AG04450 (cell line): ENCODE measurements at regions of chr22 and their contacts with region 1.

Region 1: DNA sequence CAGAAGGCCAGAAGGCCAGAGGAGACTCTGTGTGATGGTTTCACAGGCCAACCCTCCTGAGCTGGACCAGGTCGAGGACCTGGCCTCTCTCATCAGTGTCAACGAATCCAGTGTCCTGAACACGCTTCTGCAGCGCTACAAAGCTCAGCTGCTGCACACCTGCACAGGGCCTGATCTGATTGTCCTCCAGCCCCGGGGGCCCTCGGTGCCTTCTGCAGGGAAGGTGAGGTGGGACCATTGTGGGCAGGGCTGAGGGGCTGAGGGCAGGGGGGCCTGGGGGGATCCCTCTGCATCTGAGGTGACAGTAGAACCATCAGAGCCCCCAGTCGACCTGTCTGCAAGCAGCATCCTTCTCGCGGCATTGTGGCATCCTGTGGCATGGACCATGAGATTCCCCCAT is 30.3 kb downstream of the MYO18B start:
- DNase-seq: no peak
- H3K4me3 ChIP-seq: no peak overlapping the region
- H3K27ac ChIP-seq: no peak overlapping the region
- H3K27me3 ChIP-seq: no peaks in the 10 kb centered on the region
- CTCF ChIP-seq: no peak

Region 2: DNA sequence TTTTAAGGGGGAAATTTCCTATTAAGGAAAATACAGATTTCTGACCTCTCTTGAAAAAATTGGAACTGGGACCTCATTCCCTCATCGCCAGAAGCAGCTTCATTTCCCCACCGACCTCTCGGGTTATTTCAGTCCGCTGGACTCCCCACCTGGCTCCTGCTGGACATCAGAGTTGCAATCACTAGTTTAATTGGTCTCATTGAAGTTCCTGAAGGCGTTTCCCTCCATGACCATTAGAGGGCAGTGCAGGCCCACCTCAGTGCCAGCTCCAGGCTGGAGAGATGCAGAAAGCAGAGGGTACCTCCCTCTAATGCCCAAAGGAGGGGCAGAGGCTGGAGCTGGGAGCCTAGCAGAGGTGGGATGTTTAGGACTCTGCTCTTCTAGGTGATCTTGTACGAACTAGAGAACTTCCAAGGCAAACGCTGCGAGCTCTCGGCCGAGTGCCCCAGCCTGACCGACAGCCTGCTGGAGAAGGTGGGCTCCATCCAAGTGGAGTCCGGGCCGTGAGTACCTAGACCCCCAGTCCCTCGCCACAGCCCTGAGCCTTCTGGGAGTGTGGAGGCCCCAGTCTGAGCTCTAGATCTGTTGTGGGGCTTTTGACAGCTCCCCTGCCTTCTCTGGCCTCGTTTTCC is 569.9 kb before region 1 on chr22:
- CTCF ChIA-PET with region 1: interaction called, 27 read pairs
- POLR2A ChIA-PET with region 1: no interaction called
- DNase-seq: peak; percentile 11
- H3K4me3 ChIP-seq: no peak overlapping the region
- H3K27ac ChIP-seq: no peak overlapping the region
- H3K27me3 ChIP-seq: no peaks in the 10 kb centered on the region
- CTCF ChIP-seq: peak; percentile 91

Region 3: DNA sequence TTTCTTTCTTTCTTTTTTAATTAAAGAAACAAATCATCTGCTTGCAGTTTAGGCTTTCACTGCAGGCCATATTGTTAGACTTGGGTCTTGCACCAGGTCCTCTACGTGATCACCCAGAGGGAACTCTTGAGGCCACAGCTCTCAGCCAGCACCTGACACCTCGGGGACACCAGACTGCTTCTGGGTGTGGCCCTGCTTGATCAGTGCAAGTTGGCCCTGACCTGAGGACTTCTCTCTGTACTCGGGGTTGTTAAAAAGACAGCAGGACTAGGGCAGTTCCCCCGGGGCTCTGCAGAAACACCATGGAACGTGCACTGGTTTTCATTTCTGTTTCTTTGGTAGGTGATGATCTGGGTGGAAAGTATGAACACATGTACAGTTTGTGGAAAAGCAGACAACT is 81.5 kb before region 1 on chr22:
- CTCF ChIA-PET with region 1: no interaction called
- POLR2A ChIA-PET with region 1: no interaction called
- DNase-seq: no peak
- H3K4me3 ChIP-seq: no peak overlapping the region
- H3K27ac ChIP-seq: no peak overlapping the region
- H3K27me3 ChIP-seq: no peaks in the 10 kb centered on the region
- CTCF ChIP-seq: no peak